Pancreas (tissue), 10 donors: ENCODE measurements at regions of chr13 and their contacts with region 1.

Region 1: DNA sequence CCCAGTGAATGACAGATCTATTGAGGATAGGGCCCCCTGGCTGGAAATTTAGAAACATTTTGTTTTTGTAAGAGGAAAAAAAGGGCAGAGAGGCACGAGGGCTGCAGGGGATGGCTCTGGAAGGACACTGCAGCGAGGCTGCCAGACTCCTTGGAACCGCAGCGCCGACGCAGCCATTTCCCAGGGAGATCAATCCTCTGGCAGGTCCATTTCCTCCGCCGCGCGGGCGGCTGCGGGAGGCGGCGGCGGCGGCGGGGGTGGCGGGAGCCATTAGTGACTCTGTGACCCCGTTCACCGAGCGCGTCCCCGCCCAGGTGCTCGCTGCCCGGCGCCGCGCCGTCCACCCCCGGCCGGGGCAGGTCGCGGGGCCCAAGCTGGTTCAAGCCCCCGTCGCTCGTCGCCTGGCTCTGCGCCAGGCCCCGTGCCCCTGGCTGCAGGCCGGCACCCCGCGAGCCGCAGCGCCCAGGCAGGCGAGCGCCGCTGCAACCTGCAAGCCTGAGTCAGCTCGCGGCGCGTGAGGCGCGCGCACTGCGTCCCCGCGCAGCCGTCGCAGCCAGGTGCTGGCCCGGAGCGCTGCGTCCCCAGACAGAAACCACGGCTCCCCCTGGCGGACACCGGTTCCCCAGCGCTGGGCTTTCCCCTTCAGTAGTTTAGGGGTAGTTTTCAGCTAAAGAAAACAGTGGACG is 192.6 kb downstream of the KATNAL1 start:
- DNase-seq: peak; percentile 85 to 98 (median 92)
- ATAC-seq: peak; percentile 86 to 90 (median 89)
- H3K4me3 ChIP-seq: peak overlapping the region; percentile 61 to 68 (median 66)
- H3K27ac ChIP-seq: peak overlapping the region; percentile 59 to 87 (median 80)
- H3K4me1 ChIP-seq: peaks cover 8 to 21% (median 18%) of the 10 kb centered on the region in 3 donors
- H3K27me3 ChIP-seq: no peaks in the 10 kb centered on the region
- CTCF ChIP-seq: peak; percentile 79 to 88 (median 83)

Region 2: GRCh38 chr13:29508130-29508875 is 606.4 kb before region 1 on chr13:
- intact Hi-C with region 1: loop called in 2 of 3 experiments (anchors 10 kb)
- DNase-seq: peak; percentile 66 to 94 (median 88)
- ATAC-seq: peak; percentile 84 to 96 (median 91)
- H3K4me3 ChIP-seq: no peak overlapping the region
- H3K27ac ChIP-seq: no peak overlapping the region
- H3K4me1 ChIP-seq: no peaks in the 10 kb centered on the region
- H3K27me3 ChIP-seq: no peaks in the 10 kb centered on the region
- CTCF ChIP-seq: peak; percentile 97 to 99 (median 98)

Region 3: GRCh38 chr13:29513397-29514322 is 601.1 kb before region 1 on chr13:
- intact Hi-C with region 1: loop called in 2 of 3 experiments (anchors 10 kb)
- DNase-seq: no peak
- ATAC-seq: no peak
- H3K4me3 ChIP-seq: no peak overlapping the region
- H3K27ac ChIP-seq: no peak overlapping the region
- H3K4me1 ChIP-seq: no peaks in the 10 kb centered on the region
- H3K27me3 ChIP-seq: no peaks in the 10 kb centered on the region
- CTCF ChIP-seq: no peak

Region 4: DNA sequence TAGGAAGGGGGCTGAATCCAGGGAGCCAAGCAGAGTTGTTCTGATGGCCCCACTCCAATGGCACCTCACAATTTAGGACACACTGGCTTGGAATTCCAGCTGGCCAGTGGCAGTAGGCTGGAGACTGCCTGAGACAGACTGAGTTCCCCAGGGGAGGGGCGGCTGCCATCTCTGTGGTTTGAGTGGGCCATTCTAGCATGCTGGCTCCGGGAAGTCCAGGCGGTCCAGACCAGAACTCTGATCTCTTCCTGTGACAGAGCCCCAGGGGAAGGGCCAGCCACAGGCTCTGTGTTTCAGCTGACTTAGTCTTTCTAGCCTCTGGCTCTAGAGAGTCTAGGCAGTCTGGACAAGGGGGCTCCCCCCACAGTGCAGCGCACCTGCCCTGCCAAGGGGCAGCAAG is 489.7 kb before region 1 on chr13:
- intact Hi-C with region 1: no loop called
- DNase-seq: peak in 1 of 6 donors; percentile 44
- ATAC-seq: no peak
- H3K4me3 ChIP-seq: no peak overlapping the region
- H3K27ac ChIP-seq: no peak overlapping the region
- H3K4me1 ChIP-seq: no peaks in the 10 kb centered on the region
- H3K27me3 ChIP-seq: no peaks in the 10 kb centered on the region
- CTCF ChIP-seq: no peak

Region 5: GRCh38 chr13:29774830-29775229 is 339.9 kb before region 1 on chr13:
- intact Hi-C with region 1: loop called in 2 of 3 experiments (anchors 5 to 10 kb)
- DNase-seq: no peak
- ATAC-seq: no peak
- H3K4me3 ChIP-seq: no peak overlapping the region
- H3K27ac ChIP-seq: no peak overlapping the region
- H3K4me1 ChIP-seq: peaks cover 0 to 4% (median 0%) of the 10 kb centered on the region in 3 donors
- H3K27me3 ChIP-seq: no peaks in the 10 kb centered on the region
- CTCF ChIP-seq: no peak

Region 6: GRCh38 chr13:29782798-29783197 is 331.9 kb before region 1 on chr13:
- intact Hi-C with region 1: loop called in 2 of 3 experiments (anchors 5 to 10 kb)
- DNase-seq: no peak
- ATAC-seq: no peak
- H3K4me3 ChIP-seq: no peak overlapping the region
- H3K27ac ChIP-seq: no peak overlapping the region
- H3K4me1 ChIP-seq: peaks cover 8 to 33% (median 27%) of the 10 kb centered on the region in 3 donors
- H3K27me3 ChIP-seq: no peaks in the 10 kb centered on the region
- CTCF ChIP-seq: no peak

Region 7: GRCh38 chr13:29800687-29801086 is 314.0 kb before region 1 on chr13:
- intact Hi-C with region 1: no loop called
- DNase-seq: no peak
- ATAC-seq: peak in 1 of 4 donors; percentile 11
- H3K4me3 ChIP-seq: no peak overlapping the region
- H3K27ac ChIP-seq: no peak overlapping the region
- H3K4me1 ChIP-seq: peaks cover 0 to 17% (median 14%) of the 10 kb centered on the region in 3 donors
- H3K27me3 ChIP-seq: no peaks in the 10 kb centered on the region
- CTCF ChIP-seq: no peak

Region 8: GRCh38 chr13:29849731-29850223 is 264.9 kb before region 1 on chr13:
- intact Hi-C with region 1: loop called in 1 of 3 experiments (anchors 5 kb)
- DNase-seq: peak; percentile 66 to 89 (median 78)
- ATAC-seq: peak; percentile 50 to 61 (median 58)
- H3K4me3 ChIP-seq: peak overlapping the region; percentile 47 to 93 (median 74)
- H3K27ac ChIP-seq: peak overlapping the region; percentile 96 to 98 (median 98)
- H3K4me1 ChIP-seq: peaks cover 0 to 17% (median 13%) of the 10 kb centered on the region in 3 donors
- H3K27me3 ChIP-seq: no peaks in the 10 kb centered on the region
- CTCF ChIP-seq: no peak